Caco-2 (cell line): ENCODE measurements at regions of chr6 and their contacts with region 1.

Region 1: GRCh38 chr6:129498950-129499842 is 210.8 kb downstream of the ARHGAP18 start:
- DNase-seq: peak in 1 of 2 experiments; percentile 68
- H3K4me3 ChIP-seq: no peak overlapping the region
- H3K4me3 Mint-ChIP-seq: no peak overlapping the region
- H3K27ac Mint-ChIP-seq: no peak overlapping the region
- H3K4me1 ChIP-seq: peaks cover 42% of the 10 kb centered on the region
- H3K4me1 Mint-ChIP-seq: peaks cover 24% of the 10 kb centered on the region
- H3K27me3 ChIP-seq: no peaks in the 10 kb centered on the region
- H3K27me3 Mint-ChIP-seq: no peaks in the 10 kb centered on the region
- CTCF ChIP-seq: peak; percentile 39 to 65

Region 2: DNA sequence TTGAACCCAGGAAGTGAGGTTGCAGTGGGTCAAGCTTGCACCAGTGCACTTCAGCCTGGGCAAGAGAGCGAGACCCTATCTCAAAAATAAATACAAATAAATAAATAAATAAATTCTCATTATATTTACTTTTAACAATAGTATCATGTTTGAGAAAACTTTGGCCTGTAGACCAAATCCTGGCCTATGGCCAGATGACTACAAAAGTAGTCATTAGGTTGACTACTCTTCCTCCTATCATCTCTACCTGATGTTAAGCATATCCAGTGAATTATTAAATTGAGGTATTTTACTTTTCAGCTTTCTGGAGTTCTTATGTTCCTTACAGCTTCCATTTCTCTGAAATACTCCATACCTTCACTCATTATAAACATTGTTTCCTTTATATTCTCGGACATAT is 335.6 kb before region 1 on chr6:
- CTCF ChIA-PET with region 1: no interaction called
- POLR2A ChIA-PET with region 1: no interaction called
- intact Hi-C with region 1: no loop called
- DNase-seq: no peak
- H3K4me3 ChIP-seq: no peak overlapping the region
- H3K4me3 Mint-ChIP-seq: no peak overlapping the region
- H3K27ac Mint-ChIP-seq: no peak overlapping the region
- H3K4me1 ChIP-seq: no peaks in the 10 kb centered on the region
- H3K4me1 Mint-ChIP-seq: no peaks in the 10 kb centered on the region
- H3K27me3 ChIP-seq: no peaks in the 10 kb centered on the region
- H3K27me3 Mint-ChIP-seq: no peaks in the 10 kb centered on the region
- CTCF ChIP-seq: no peak

Region 3: GRCh38 chr6:129521941-129522630 is 22.9 kb after region 1 on chr6:
- CTCF ChIA-PET with region 1: interaction called, 3 read pairs
- POLR2A ChIA-PET with region 1: no interaction called
- intact Hi-C with region 1: loop called (anchors 2 kb)
- DNase-seq: no peak
- H3K4me3 ChIP-seq: no peak overlapping the region
- H3K4me3 Mint-ChIP-seq: no peak overlapping the region
- H3K27ac Mint-ChIP-seq: no peak overlapping the region
- H3K4me1 ChIP-seq: peaks cover 25% of the 10 kb centered on the region
- H3K4me1 Mint-ChIP-seq: peaks cover 12% of the 10 kb centered on the region
- H3K27me3 ChIP-seq: no peaks in the 10 kb centered on the region
- H3K27me3 Mint-ChIP-seq: no peaks in the 10 kb centered on the region
- CTCF ChIP-seq: no peak

Region 4: DNA sequence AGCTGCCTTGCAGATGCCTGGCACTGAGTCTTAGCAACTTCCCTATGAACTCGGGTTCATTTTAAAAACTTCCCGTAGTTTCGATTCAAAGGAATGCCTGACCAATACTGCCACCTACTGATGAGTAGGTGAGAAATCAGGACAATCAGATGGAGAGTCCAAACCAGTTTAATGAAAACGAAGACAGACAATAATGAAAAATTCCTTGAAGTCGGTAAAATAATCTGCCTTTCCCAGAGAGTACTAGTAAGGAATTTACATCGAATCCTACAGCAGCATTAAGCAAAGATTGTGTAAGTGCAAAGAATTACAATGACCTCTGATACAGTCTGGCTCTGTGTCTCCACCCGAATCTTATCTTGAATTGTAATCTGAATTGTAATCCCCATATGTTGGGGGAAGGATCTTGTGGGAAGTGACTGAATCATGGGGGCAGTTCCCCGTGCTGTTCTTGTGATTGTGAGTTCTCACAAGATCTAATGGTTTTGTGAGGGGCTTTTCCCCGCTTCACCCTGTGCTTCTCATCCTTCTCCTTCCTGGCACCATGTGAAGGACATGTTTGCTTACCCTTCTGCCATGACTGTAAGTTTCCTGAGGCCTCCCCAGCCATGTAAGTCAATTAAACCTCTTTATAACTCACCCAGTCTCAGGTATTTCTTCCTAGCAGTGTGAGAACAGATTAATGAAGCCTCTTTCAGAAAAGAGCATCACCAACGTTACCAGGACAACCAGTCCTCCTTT is 76.4 kb after region 1 on chr6:
- CTCF ChIA-PET with region 1: interaction called, 14 read pairs
- POLR2A ChIA-PET with region 1: no interaction called
- intact Hi-C with region 1: loop called (anchors 1 kb)
- DNase-seq: peak in 1 of 2 experiments; percentile 32
- H3K4me3 ChIP-seq: no peak overlapping the region
- H3K4me3 Mint-ChIP-seq: no peak overlapping the region
- H3K27ac Mint-ChIP-seq: no peak overlapping the region
- H3K4me1 ChIP-seq: peaks cover 10% of the 10 kb centered on the region
- H3K4me1 Mint-ChIP-seq: peaks cover 10% of the 10 kb centered on the region
- H3K27me3 ChIP-seq: no peaks in the 10 kb centered on the region
- H3K27me3 Mint-ChIP-seq: no peaks in the 10 kb centered on the region
- CTCF ChIP-seq: peak; percentile 63 to 64

Region 5: GRCh38 chr6:129661536-129662405 is 162.6 kb after region 1 on chr6:
- CTCF ChIA-PET with region 1: no interaction called
- POLR2A ChIA-PET with region 1: no interaction called
- intact Hi-C with region 1: loop called (anchors 10 kb)
- DNase-seq: no peak
- H3K4me3 ChIP-seq: no peak overlapping the region
- H3K4me3 Mint-ChIP-seq: peak overlapping the region; percentile 35
- H3K27ac Mint-ChIP-seq: peak overlapping the region; percentile 77
- H3K4me1 ChIP-seq: peaks cover 39% of the 10 kb centered on the region
- H3K4me1 Mint-ChIP-seq: peaks cover 36% of the 10 kb centered on the region
- H3K27me3 ChIP-seq: no peaks in the 10 kb centered on the region
- H3K27me3 Mint-ChIP-seq: no peaks in the 10 kb centered on the region
- CTCF ChIP-seq: no peak

Region 6: GRCh38 chr6:129753422-129753821 is 254.2 kb after region 1 on chr6:
- CTCF ChIA-PET with region 1: no interaction called
- POLR2A ChIA-PET with region 1: no interaction called
- intact Hi-C with region 1: loop called (anchors 1 kb)
- DNase-seq: no peak
- H3K4me3 ChIP-seq: no peak overlapping the region
- H3K4me3 Mint-ChIP-seq: no peak overlapping the region
- H3K27ac Mint-ChIP-seq: no peak overlapping the region
- H3K4me1 ChIP-seq: no peaks in the 10 kb centered on the region
- H3K4me1 Mint-ChIP-seq: no peaks in the 10 kb centered on the region
- H3K27me3 ChIP-seq: no peaks in the 10 kb centered on the region
- H3K27me3 Mint-ChIP-seq: no peaks in the 10 kb centered on the region
- CTCF ChIP-seq: no peak